Naive thymus-derived CD4-positive, alpha-beta T cell (primary cell): ENCODE measurements at regions of chr3 and their contacts with region 1.

Region 1: GRCh38 chr3:196179380-196180308 is 31.6 kb downstream of the ZDHHC19 start:
- DNase-seq: peak; percentile 56 to 91 (median 87)
- ATAC-seq: peak; percentile 93
- H3K4me3 ChIP-seq: peak overlapping the region; percentile 41
- H3K4me3 Mint-ChIP-seq: peak overlapping the region; percentile 66 to 88 (median 72)
- H3K27ac ChIP-seq: peak overlapping the region; percentile 79
- H3K27ac Mint-ChIP-seq: peak overlapping the region; percentile 86 to 99 (median 93)
- H3K4me1 ChIP-seq: peaks cover 29 to 44% of the 10 kb centered on the region in 2 donors
- H3K4me1 Mint-ChIP-seq: peaks cover 16 to 62% (median 35%) of the 10 kb centered on the region in 7 donors
- H3K27me3 ChIP-seq: no peaks in the 10 kb centered on the region
- H3K27me3 Mint-ChIP-seq: no peaks in the 10 kb centered on the region

Region 2: GRCh38 chr3:195876297-195877031 is 303.2 kb before region 1 on chr3:
- CTCF ChIA-PET with region 1: no interaction called
- POLR2A ChIA-PET with region 1: no interaction called
- intact Hi-C with region 1: no loop called
- DNase-seq: no peak
- ATAC-seq: peak; percentile 52
- H3K4me3 ChIP-seq: no peak overlapping the region
- H3K4me3 Mint-ChIP-seq: no peak overlapping the region
- H3K27ac ChIP-seq: no peak overlapping the region
- H3K27ac Mint-ChIP-seq: peak overlapping the region in 3 of 9 donors; percentile 12 to 53 (median 13)
- H3K4me1 ChIP-seq: no peaks in the 10 kb centered on the region
- H3K4me1 Mint-ChIP-seq: peaks cover 0 to 9% (median 0%) of the 10 kb centered on the region in 7 donors
- H3K27me3 ChIP-seq: no peaks in the 10 kb centered on the region
- H3K27me3 Mint-ChIP-seq: no peaks in the 10 kb centered on the region

Region 3: GRCh38 chr3:196073188-196073838 is 106.3 kb before region 1 on chr3:
- CTCF ChIA-PET with region 1: interaction called, 26 read pairs
- POLR2A ChIA-PET with region 1: interaction called, 40 read pairs
- intact Hi-C with region 1: loop called (anchors 1 kb)
- DNase-seq: peak; percentile 33 to 81 (median 75)
- ATAC-seq: peak; percentile 100
- H3K4me3 ChIP-seq: no peak overlapping the region
- H3K4me3 Mint-ChIP-seq: peak overlapping the region in 1 of 10 donors; percentile 44
- H3K27ac ChIP-seq: no peak overlapping the region
- H3K27ac Mint-ChIP-seq: peak overlapping the region in 6 of 9 donors; percentile 4 to 82 (median 54)
- H3K4me1 ChIP-seq: peaks cover 7% of the 10 kb centered on the region in 2 donors
- H3K4me1 Mint-ChIP-seq: peaks cover 13 to 53% (median 18%) of the 10 kb centered on the region in 7 donors
- H3K27me3 ChIP-seq: no peaks in the 10 kb centered on the region
- H3K27me3 Mint-ChIP-seq: no peaks in the 10 kb centered on the region

Region 4: GRCh38 chr3:196120271-196120966 is 59.2 kb before region 1 on chr3:
- CTCF ChIA-PET with region 1: no interaction called
- POLR2A ChIA-PET with region 1: no interaction called
- intact Hi-C with region 1: loop called in 1 of 2 experiments (anchors 2 kb)
- DNase-seq: peak in 2 of 9 donors; percentile 2 to 8
- ATAC-seq: peak; percentile 34
- H3K4me3 ChIP-seq: no peak overlapping the region
- H3K4me3 Mint-ChIP-seq: peak overlapping the region in 4 of 10 donors; percentile 34 to 72 (median 49)
- H3K27ac ChIP-seq: no peak overlapping the region
- H3K27ac Mint-ChIP-seq: peak overlapping the region in 3 of 9 donors; percentile 47 to 65 (median 56)
- H3K4me1 ChIP-seq: peaks cover 10 to 21% of the 10 kb centered on the region in 2 donors
- H3K4me1 Mint-ChIP-seq: peaks cover 6 to 38% (median 29%) of the 10 kb centered on the region in 7 donors
- H3K27me3 ChIP-seq: no peaks in the 10 kb centered on the region
- H3K27me3 Mint-ChIP-seq: no peaks in the 10 kb centered on the region

Region 5: DNA sequence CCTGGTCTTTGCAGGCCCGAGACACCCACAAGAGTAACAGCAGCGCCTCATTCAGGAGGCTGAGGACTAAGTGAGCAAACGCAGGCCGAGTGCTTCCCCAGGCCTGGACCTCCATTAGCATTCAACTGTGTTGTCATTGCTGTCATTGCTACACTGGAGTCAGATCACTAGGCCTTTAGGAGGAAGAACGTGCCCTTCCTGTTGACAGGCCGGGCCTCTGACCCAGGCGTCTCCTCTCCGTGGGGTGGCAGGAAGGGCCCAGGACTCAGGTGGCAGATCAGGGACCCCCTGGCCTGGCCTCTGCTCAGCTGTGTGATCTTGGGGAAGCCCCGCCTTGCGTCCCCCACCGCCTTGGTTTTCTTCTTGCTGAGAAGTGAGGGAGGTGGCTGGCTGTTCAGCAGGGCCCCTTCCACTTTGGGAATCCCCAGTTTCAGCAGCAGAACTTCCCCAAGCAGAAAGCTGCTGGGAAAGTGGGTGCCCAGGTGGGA is 12.4 kb after region 1 on chr3:
- CTCF ChIA-PET with region 1: interaction called, 6 read pairs
- POLR2A ChIA-PET with region 1: interaction called, 20 read pairs
- intact Hi-C with region 1: loop called (anchors 1 kb)
- DNase-seq: peak in 4 of 9 donors; percentile 27 to 57 (median 35)
- ATAC-seq: peak; percentile 64
- H3K4me3 ChIP-seq: no peak overlapping the region
- H3K4me3 Mint-ChIP-seq: peak overlapping the region in 7 of 10 donors; percentile 25 to 73 (median 49)
- H3K27ac ChIP-seq: peak overlapping the region; percentile 63
- H3K27ac Mint-ChIP-seq: peak overlapping the region; percentile 61 to 98 (median 87)
- H3K4me1 ChIP-seq: peaks cover 9 to 29% of the 10 kb centered on the region in 2 donors
- H3K4me1 Mint-ChIP-seq: peaks cover 14 to 41% (median 16%) of the 10 kb centered on the region in 7 donors
- H3K27me3 ChIP-seq: no peaks in the 10 kb centered on the region
- H3K27me3 Mint-ChIP-seq: no peaks in the 10 kb centered on the region

Region 6: DNA sequence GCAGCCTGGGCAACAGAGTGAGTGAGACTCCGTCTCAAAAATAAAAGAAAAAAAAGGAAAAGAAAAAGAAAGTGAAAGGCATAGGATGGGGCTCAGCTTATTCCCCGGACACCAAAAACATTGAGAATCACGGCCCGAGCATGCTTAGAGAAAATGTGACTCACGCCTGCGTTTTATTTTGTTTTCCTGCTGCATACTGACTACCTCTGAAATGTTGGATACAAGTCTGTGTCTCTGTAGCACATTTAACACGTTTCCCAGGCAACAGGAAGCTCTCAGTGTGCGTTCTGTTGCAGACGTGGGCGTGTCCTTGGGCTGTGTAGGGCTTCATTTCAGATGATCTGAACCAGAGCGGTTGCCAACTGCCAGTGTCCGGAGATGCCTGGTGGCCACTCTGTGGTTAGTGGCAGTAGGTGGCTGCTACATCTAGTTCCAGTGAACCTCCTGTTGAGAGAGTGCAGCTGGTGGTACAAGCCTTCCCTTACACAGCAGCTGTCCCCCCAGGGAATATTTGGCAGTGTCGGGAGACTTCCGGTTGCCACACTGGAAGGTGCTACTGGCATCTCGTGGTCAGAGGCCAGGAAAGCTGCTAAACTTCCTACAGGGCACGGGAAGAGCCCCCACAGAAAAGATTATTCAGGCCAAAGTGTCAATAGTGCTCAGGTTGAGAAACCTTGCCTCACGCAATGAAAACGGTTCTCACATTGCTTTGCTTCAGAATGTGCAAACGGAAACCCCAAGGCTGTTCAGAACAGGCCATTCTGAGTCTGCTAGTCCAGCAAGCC is 39.7 kb after region 1 on chr3:
- CTCF ChIA-PET with region 1: no interaction called
- POLR2A ChIA-PET with region 1: no interaction called
- intact Hi-C with region 1: loop called in 1 of 2 experiments (anchors 1 kb)
- DNase-seq: peak in 8 of 9 donors; percentile 56 to 90 (median 80)
- ATAC-seq: peak; percentile 96
- H3K4me3 ChIP-seq: peak overlapping the region; percentile 49
- H3K4me3 Mint-ChIP-seq: peak overlapping the region; percentile 76 to 89 (median 82)
- H3K27ac ChIP-seq: peak overlapping the region; percentile 60
- H3K27ac Mint-ChIP-seq: peak overlapping the region; percentile 87 to 98 (median 91)
- H3K4me1 ChIP-seq: peaks cover 6 to 7% of the 10 kb centered on the region in 2 donors
- H3K4me1 Mint-ChIP-seq: peaks cover 10 to 20% (median 15%) of the 10 kb centered on the region in 7 donors
- H3K27me3 ChIP-seq: no peaks in the 10 kb centered on the region
- H3K27me3 Mint-ChIP-seq: peaks cover 0 to 5% (median 4%) of the 10 kb centered on the region in 5 donors

Region 7: GRCh38 chr3:196336319-196337145 is 156.9 kb after region 1 on chr3:
- CTCF ChIA-PET with region 1: no interaction called
- POLR2A ChIA-PET with region 1: no interaction called
- intact Hi-C with region 1: no loop called
- DNase-seq: no peak
- ATAC-seq: no peak
- H3K4me3 ChIP-seq: no peak overlapping the region
- H3K4me3 Mint-ChIP-seq: no peak overlapping the region
- H3K27ac ChIP-seq: no peak overlapping the region
- H3K27ac Mint-ChIP-seq: no peak overlapping the region
- H3K4me1 ChIP-seq: no peaks in the 10 kb centered on the region
- H3K4me1 Mint-ChIP-seq: peaks cover 0 to 1% (median 0%) of the 10 kb centered on the region in 7 donors
- H3K27me3 ChIP-seq: no peaks in the 10 kb centered on the region
- H3K27me3 Mint-ChIP-seq: peaks cover 0 to 8% (median 0%) of the 10 kb centered on the region in 5 donors